ENCODE measurements at regions of chr3 and their contacts with region 1.

Region 1: DNA sequence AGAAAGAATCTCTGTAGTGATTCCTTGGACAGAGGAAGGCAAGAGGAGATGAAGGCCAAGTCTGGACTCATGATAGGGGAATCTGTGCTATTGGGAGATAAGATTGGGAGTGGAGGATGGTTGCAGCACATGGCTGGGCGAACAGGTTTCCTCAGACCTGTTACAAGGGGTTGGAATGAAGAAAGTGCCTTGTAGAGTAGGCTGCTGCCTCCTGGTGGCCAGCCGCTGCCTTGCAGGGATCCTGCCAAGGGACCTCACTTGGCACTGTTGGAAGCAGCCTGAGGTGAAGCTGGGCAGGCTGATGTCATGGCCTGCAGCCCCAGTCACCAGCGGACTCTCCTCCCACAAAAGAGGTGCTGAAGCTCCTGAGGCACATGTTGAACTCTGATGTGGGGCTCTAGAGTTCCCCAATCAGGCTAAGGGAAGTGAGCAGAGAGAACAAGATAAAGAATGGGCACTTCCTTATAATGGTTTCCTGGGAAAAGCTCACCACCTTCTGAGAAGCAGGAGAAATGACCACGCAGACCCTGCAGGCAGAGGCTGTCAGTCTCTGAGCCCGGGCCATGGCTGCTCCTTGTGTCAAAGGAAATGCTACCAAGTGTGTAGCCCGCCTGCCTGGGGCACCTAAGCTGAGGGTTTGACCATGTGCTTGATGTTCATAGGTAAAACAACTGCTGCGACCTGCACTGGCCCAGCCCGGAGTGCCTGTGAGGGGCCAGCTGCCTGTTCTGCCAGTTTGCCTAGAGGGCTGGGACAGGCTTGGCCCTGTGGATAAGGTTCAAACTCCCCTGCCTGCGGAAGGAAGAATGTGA is 1.6 kb upstream of the TEX264 start:
- DNase-seq: peak; percentile 93
- ATAC-seq: peak; percentile 39

Region 2: GRCh38 chr3:51501833-51502561 is 167.4 kb before region 1 on chr3:
- intact Hi-C with region 1: loop called (anchors 2 kb)
- DNase-seq: peak; percentile 88
- ATAC-seq: peak; percentile 24

Region 3: GRCh38 chr3:51538459-51539290 is 130.8 kb before region 1 on chr3 and contains the start of gene RAD54L2:
- intact Hi-C with region 1: loop called (anchors 10 kb)
- DNase-seq: peak; percentile 89
- ATAC-seq: peak; percentile 99
- total RNA-seq, gene RAD54L2: 8.4 TPM

Measured in Right ventricle myocardium superior (tissue), 1 donor.